ENCODE measurements at regions of chr16 and their contacts with region 1.

Region 1: GRCh38 chr16:20383106-20384029 is 21.2 kb downstream of the PDILT start:
- DNase-seq: peak; percentile 6 to 32 (median 21)
- H3K4me3 ChIP-seq: no peak overlapping the region
- H3K4me3 Mint-ChIP-seq: no peak overlapping the region
- H3K27ac ChIP-seq: no peak overlapping the region
- H3K27ac Mint-ChIP-seq: no peak overlapping the region
- H3K4me1 ChIP-seq: no peaks in the 10 kb centered on the region
- H3K4me1 Mint-ChIP-seq: no peaks in the 10 kb centered on the region
- H3K27me3 ChIP-seq: no peaks in the 10 kb centered on the region
- H3K27me3 Mint-ChIP-seq: peaks cover 9 to 29% (median 14%) of the 10 kb centered on the region in 3 donors
- CTCF ChIP-seq: peak; percentile 82

Region 2: DNA sequence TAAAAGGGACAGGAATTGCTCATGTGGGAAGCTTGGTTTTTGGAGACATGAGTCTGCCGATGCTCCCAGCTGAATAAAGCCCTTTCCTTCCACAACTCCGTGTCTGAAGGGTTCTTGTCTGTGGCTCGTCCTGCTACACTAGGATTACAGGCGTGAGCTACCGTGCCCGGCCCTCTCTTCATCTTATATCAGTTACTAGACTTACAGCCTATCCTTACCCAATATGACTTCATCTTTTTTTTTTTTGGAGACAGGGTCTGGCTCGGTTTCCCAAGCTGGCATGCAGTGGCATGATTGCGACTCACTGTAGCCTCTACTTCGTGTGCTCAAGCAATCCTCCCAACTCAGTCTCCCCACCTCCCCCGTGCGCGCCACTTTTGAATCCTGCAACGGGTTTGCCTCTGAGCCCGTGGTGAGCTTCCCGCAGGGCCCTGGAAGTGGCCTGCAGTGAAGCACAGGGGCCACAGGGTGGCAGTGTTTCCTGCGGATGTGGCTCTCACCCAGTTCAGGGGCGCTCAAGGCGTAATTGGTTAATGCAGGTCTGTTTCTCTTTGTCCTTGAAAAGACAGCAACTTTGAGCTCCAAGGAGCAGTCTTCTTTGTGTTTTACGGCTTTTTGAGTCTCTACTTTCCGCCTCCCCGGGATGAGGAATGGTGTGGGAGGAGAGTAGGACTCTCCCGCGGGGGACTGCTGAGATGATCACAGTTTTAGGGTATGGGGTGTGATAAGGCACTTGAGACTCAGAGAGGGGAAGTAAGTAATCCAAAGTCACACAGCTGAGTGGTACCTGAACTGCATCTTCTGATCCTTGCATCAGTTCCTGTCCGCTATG is 476.0 kb before region 1 on chr16:
- intact Hi-C with region 1: loop called (anchors 10 kb)
- DNase-seq: peak; percentile 32 to 43 (median 34)
- H3K4me3 ChIP-seq: no peak overlapping the region
- H3K4me3 Mint-ChIP-seq: peak overlapping the region in 1 of 2 donors; percentile 24
- H3K27ac ChIP-seq: no peak overlapping the region
- H3K27ac Mint-ChIP-seq: peak overlapping the region in 1 of 7 donors; percentile 10
- H3K4me1 ChIP-seq: no peaks in the 10 kb centered on the region
- H3K4me1 Mint-ChIP-seq: peaks cover 8% of the 10 kb centered on the region
- H3K27me3 ChIP-seq: no peaks in the 10 kb centered on the region
- H3K27me3 Mint-ChIP-seq: peaks cover 11 to 33% (median 11%) of the 10 kb centered on the region in 3 donors
- CTCF ChIP-seq: peak; percentile 94

Region 3: DNA sequence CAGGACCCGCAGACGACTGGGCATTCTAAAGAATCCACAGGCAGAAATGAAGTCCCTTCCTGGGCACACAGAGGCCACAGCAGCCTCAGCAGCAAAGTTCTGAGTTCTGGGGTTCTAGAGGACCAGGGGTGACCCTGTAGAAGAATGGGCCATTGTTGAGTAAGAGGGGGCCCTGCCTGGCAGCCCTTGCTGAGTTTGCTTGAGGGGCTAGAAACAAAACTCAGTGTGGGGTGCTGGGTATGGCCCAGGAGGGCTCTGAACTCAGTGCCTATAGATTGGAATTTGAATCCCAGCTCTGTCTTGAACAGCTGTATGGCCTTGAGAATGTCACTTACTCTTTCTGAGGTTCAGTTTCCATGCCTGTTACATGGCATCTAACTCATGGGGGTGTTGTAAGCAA is 21.3 kb after region 1 on chr16 and contains the start of gene PDILT:
- intact Hi-C with region 1: loop called in 1 of 2 experiments (anchors 2 kb)
- DNase-seq: no peak
- H3K4me3 ChIP-seq: no peak within 1 kb of the TSS
- H3K4me3 Mint-ChIP-seq: no peak within 1 kb of the TSS
- H3K27ac ChIP-seq: no peak within 1 kb of the TSS
- H3K27ac Mint-ChIP-seq: no peak within 1 kb of the TSS
- H3K4me1 ChIP-seq: peaks cover 8 to 9% of the 10 kb centered on the region in 2 donors
- H3K4me1 Mint-ChIP-seq: peaks cover 6% of the 10 kb centered on the region
- H3K27me3 ChIP-seq: no peaks in the 10 kb centered on the region
- H3K27me3 Mint-ChIP-seq: peaks cover 0 to 7% (median 7%) of the 10 kb centered on the region in 3 donors
- CTCF ChIP-seq: no peak
- polyA plus RNA-seq, gene PDILT: not detected